ENCODE measurements at regions of chr9 and their contacts with region 1.

Region 1: DNA sequence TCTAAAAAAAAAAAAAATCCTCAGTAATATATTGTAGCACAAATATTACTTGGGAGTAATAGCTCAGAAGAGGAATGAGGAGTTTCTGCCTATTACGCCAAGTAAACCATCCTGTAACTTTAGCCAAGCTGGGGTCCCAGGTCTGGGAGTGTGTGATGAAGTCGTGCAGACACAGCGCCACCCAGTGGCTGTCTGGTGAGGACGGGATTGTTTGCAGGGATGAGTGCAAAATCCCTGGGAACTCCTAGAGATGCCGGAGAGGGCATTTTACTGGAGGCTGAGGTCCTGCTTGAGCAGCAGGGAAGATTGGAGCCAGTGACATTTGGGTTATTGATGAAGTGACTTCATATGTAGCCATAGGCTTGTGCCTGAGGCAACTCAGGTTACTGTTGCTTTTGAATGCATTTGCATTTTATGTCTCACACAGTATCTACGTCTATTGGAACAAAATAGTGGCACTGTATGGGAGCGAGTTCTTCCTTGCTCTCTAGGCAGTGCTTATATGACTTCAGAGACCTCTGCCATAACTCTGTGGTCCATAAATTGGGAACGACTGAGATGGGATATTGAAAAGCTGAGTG is 72.8 kb downstream of the PSAT1 start:
- DNase-seq: peak; percentile 60
- ATAC-seq: peak; percentile 98
- H3K4me3 ChIP-seq: no peak overlapping the region
- H3K27ac ChIP-seq: no peak overlapping the region
- H3K4me1 ChIP-seq: no peaks in the 10 kb centered on the region
- H3K27me3 ChIP-seq: no peaks in the 10 kb centered on the region
- CTCF ChIP-seq: peak; percentile 92
- EP300 ChIP-seq: no peak
- POLR2A ChIP-seq: no peak
- RAD21 ChIP-seq: peak; percentile 75; the same call in 1 of the 2 replicates

Region 2: DNA sequence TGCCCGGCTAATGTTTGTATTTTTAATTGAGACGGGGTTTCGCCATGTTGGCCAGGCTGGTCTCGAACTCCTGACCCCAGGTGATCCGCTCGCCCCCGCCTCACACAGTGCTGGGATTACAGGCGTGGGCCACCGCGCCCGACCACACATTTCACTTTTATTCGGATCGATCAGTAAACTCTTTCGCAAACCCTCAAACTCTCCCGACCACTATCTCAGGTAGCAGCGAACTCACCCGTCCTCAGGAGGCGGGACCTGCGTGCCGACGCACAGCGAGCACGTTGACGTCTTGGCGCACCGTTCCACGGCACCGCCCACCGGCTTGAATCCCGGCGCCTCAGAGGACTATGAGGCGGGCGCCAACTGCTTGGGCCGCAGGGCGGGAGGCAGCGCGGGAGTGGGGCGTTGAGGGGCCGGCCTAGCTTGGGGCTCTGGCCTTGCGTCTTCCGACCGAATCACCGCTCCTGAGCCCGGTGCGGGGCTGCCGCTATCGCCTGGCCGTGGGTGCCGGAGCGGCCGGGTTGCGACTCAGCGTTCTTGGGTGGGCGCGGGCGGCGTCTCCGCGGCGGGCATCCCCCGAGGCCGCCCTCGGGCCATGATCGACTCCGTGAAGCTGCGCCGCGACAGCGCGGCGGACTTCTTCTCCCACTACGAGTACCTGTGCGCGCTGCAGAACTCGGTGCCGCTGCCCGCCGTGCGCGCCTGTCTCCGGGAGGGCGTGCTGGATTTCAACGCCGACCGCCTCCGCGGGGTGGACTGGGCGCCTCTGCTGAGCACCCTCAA is 133.8 kb before region 1 on chr9 and contains the start of gene CEP78:
- CTCF ChIA-PET with region 1: interaction called, 19 read pairs
- POLR2A ChIA-PET with region 1: no interaction called
- in situ Hi-C with region 1: no loop called
- intact Hi-C with region 1: loop called (anchors 1 kb)
- DNase-seq: peak; percentile 89
- ATAC-seq: peak; percentile 96
- H3K4me3 ChIP-seq: peak within 1 kb of the TSS; percentile 80 to 96 (median 87)
- H3K27ac ChIP-seq: peak within 1 kb of the TSS; percentile 80
- H3K4me1 ChIP-seq: peaks cover 49% of the 10 kb centered on the region
- H3K27me3 ChIP-seq: no peaks in the 10 kb centered on the region
- CTCF ChIP-seq: no peak
- EP300 ChIP-seq: no peak
- POLR2A ChIP-seq: peak in 1 of 2 experiments; percentile 75
- RAD21 ChIP-seq: no peak
- total RNA-seq, gene CEP78: 30.8 and 38.3 TPM in 2 replicates

Region 3: DNA sequence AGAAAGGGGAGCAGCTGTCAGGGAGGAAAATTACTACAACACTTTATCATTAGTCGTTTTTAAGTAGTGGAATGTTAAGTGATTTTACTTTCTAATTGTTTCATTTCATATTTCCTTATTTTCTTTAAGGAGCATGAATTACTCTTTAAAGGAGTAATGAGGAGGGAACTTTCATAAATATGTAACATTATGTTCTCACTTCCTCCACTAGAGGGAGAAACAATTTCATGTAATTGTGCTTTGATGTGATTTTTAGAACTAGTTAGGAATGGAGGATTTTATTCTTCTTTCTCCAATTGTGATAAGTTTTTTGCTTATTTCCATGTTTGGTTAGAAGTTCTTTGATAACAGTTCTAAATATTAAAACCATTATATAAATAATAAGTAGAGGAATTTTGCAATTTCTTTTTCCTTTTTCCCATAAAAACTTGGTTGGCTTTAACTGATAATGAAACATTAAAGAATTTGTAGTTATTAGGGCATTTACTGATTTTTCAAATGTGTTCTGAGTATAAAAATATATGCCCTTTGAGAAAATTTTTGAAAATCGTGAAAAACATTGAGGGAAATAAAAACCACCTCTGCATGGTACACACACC is 108.2 kb before region 1 on chr9:
- CTCF ChIA-PET with region 1: interaction called, 10 read pairs
- POLR2A ChIA-PET with region 1: no interaction called
- in situ Hi-C with region 1: loop called (anchors 5 kb)
- intact Hi-C with region 1: loop called (anchors 1 kb)
- DNase-seq: peak; percentile 23
- ATAC-seq: no peak
- H3K4me3 ChIP-seq: no peak overlapping the region
- H3K27ac ChIP-seq: no peak overlapping the region
- H3K4me1 ChIP-seq: no peaks in the 10 kb centered on the region
- H3K27me3 ChIP-seq: no peaks in the 10 kb centered on the region
- CTCF ChIP-seq: peak; percentile 66
- EP300 ChIP-seq: no peak
- POLR2A ChIP-seq: no peak
- RAD21 ChIP-seq: peak; percentile 20; the same call in 1 of the 2 replicates

Region 4: GRCh38 chr9:78332381-78332780 is 37.3 kb before region 1 on chr9:
- CTCF ChIA-PET with region 1: no interaction called
- POLR2A ChIA-PET with region 1: no interaction called
- in situ Hi-C with region 1: no loop called
- intact Hi-C with region 1: loop called (anchors 5 kb)
- DNase-seq: no peak
- ATAC-seq: no peak
- H3K4me3 ChIP-seq: no peak overlapping the region
- H3K27ac ChIP-seq: no peak overlapping the region
- H3K4me1 ChIP-seq: peaks cover 21% of the 10 kb centered on the region
- H3K27me3 ChIP-seq: no peaks in the 10 kb centered on the region
- CTCF ChIP-seq: no peak
- EP300 ChIP-seq: no peak
- POLR2A ChIP-seq: no peak
- RAD21 ChIP-seq: no peak

Region 5: GRCh38 chr9:78439190-78439865 is 69.6 kb after region 1 on chr9:
- CTCF ChIA-PET with region 1: no interaction called
- POLR2A ChIA-PET with region 1: no interaction called
- in situ Hi-C with region 1: no loop called
- intact Hi-C with region 1: loop called (anchors 1 kb)
- DNase-seq: peak; percentile 66
- ATAC-seq: peak; percentile 79
- H3K4me3 ChIP-seq: no peak overlapping the region
- H3K27ac ChIP-seq: no peak overlapping the region
- H3K4me1 ChIP-seq: no peaks in the 10 kb centered on the region
- H3K27me3 ChIP-seq: no peaks in the 10 kb centered on the region; a peak in 1 of 5 replicates
- CTCF ChIP-seq: peak; percentile 92
- EP300 ChIP-seq: no peak
- POLR2A ChIP-seq: no peak
- RAD21 ChIP-seq: peak; percentile 63

Region 6: DNA sequence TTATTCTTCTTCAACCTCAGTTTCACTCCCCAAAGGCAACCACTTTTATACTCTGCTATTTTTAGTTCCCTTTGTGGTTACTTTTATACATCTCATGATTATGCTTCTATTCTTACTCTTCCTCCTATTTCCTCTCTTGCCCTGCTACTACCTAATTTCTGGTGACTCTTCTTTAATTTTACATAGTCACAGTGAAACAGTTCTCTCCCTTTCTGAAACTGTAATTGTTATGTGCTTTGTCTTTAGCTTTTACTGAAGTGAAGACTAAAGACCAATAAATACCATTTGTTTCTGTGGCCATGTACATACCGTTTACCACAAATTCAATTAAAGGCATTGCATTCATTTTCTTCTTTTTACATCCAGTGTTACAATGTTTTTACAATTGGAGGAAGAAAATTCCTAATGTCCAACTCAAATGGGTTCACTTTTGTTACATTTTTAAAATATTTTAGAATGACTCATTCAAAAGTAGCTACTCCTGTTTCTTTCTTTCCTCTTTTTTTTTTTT is 337.8 kb after region 1 on chr9:
- CTCF ChIA-PET with region 1: no interaction called
- POLR2A ChIA-PET with region 1: no interaction called
- in situ Hi-C with region 1: no loop called
- intact Hi-C with region 1: loop called (anchors 10 kb)
- DNase-seq: no peak
- ATAC-seq: no peak
- H3K4me3 ChIP-seq: no peak overlapping the region
- H3K27ac ChIP-seq: no peak overlapping the region
- H3K4me1 ChIP-seq: no peaks in the 10 kb centered on the region
- H3K27me3 ChIP-seq: no peaks in the 10 kb centered on the region
- CTCF ChIP-seq: no peak
- EP300 ChIP-seq: no peak
- POLR2A ChIP-seq: no peak
- RAD21 ChIP-seq: no peak

Measured in HepG2 (cell line).